ENCODE measurements at regions of chr10 and their contacts with region 1.

Region 1: GRCh38 chr10:96743988-96744585 is 23.8 kb upstream of the PIK3AP1 start:
- DNase-seq: peak; percentile 44
- ATAC-seq: peak; percentile 74
- H3K4me3 ChIP-seq: no peak overlapping the region
- H3K27ac ChIP-seq: no peak overlapping the region
- H3K4me1 ChIP-seq: peaks cover 17% of the 10 kb centered on the region
- H3K27me3 ChIP-seq: peaks cover 0 to 3% of the 10 kb centered on the region in 2 experiments; a peak in 1 of 5 replicates
- CTCF ChIP-seq: peak; percentile 70
- EP300 ChIP-seq: no peak
- POLR2A ChIP-seq: no peak
- RAD21 ChIP-seq: 0 out of 2 replicates have a peak, but pooled peaks have one; percentile 32

Region 2: DNA sequence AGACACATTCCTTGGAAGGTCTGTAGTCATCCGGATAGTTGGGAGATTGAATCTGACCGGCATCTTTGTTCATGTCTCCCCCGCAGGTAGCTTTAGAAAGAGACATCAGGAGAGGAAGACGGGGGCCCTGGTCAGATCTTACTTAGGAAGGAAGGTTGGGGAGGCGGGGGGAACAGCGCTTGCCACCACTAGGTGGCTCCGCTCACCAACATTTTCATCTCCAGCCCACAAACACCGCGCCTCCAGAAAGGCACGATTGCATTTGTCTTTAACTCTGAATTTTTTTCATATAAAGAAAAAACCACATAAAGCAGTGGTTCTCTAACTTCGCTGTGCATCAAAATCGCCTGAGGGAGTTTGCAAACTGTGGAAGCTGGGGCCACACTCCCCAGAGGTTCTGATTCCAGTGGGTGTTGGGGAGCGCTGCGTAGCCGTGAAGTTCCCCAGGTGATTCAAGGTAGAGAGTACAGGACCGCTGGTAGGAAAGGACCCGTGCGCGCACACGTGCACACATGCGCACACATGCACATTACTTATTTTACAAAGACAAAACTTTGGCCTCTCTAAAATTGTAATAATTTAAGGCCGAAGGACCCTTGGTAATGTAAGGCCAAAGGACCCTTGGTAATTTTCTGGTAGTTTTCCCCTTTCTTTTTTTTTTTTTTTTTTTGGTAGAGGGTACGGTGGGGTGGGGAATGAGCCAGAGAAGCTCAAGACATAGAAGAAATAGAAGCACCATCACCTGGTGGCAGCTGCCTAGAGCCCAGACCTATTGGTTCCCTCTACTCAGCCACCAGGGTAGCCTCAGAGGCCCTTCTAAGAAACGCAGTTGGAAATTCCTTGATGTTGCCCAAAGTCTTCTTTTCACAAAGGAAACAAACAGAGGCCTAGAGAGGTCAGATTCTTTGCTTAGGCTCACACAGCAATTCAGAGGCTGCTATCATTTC is 347.9 kb before region 1 on chr10:
- CTCF ChIA-PET with region 1: no interaction called
- POLR2A ChIA-PET with region 1: no interaction called
- in situ Hi-C with region 1: loop called (anchors 10 kb)
- intact Hi-C with region 1: no loop called
- DNase-seq: peak; percentile 41
- ATAC-seq: peak; percentile 92
- H3K4me3 ChIP-seq: peak overlapping the region in 1 of 3 experiments; percentile 20; a peak in 1 of 6 replicates
- H3K27ac ChIP-seq: no peak overlapping the region
- H3K4me1 ChIP-seq: no peaks in the 10 kb centered on the region
- H3K27me3 ChIP-seq: peaks cover 7 to 82% of the 10 kb centered on the region in 2 experiments
- CTCF ChIP-seq: peak; percentile 84
- EP300 ChIP-seq: no peak
- POLR2A ChIP-seq: no peak
- RAD21 ChIP-seq: peak; percentile 71

Region 3: DNA sequence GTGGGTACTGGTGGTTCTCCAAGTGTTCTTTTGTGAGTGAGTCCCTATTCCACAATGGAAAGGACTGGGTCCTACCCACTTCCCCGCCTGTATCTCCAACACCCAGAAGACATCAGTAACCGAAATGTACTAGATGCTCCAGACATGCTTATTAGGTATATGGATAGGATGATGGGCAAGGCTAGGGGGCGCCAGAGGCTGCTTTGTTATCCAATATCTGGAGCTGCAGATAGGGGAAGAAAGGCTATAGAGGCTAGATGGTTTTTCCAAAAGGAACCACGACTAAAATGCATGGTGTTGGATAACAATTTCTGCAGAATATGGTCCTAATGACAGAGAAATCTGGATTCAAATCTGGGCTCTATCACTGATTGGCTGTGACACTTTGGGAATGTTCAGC is 101.1 kb before region 1 on chr10:
- CTCF ChIA-PET with region 1: interaction called, 7 read pairs
- POLR2A ChIA-PET with region 1: interaction called, 3 read pairs
- in situ Hi-C with region 1: loop called (anchors 5 kb)
- intact Hi-C with region 1: loop called (anchors 5 kb)
- DNase-seq: peak; percentile 54
- ATAC-seq: peak; percentile 84
- H3K4me3 ChIP-seq: no peak overlapping the region
- H3K27ac ChIP-seq: no peak overlapping the region
- H3K4me1 ChIP-seq: peaks cover 27% of the 10 kb centered on the region
- H3K27me3 ChIP-seq: no peaks in the 10 kb centered on the region; a peak in 1 of 5 replicates
- CTCF ChIP-seq: peak; percentile 81
- EP300 ChIP-seq: no peak
- POLR2A ChIP-seq: no peak
- RAD21 ChIP-seq: peak; percentile 72

Region 4: DNA sequence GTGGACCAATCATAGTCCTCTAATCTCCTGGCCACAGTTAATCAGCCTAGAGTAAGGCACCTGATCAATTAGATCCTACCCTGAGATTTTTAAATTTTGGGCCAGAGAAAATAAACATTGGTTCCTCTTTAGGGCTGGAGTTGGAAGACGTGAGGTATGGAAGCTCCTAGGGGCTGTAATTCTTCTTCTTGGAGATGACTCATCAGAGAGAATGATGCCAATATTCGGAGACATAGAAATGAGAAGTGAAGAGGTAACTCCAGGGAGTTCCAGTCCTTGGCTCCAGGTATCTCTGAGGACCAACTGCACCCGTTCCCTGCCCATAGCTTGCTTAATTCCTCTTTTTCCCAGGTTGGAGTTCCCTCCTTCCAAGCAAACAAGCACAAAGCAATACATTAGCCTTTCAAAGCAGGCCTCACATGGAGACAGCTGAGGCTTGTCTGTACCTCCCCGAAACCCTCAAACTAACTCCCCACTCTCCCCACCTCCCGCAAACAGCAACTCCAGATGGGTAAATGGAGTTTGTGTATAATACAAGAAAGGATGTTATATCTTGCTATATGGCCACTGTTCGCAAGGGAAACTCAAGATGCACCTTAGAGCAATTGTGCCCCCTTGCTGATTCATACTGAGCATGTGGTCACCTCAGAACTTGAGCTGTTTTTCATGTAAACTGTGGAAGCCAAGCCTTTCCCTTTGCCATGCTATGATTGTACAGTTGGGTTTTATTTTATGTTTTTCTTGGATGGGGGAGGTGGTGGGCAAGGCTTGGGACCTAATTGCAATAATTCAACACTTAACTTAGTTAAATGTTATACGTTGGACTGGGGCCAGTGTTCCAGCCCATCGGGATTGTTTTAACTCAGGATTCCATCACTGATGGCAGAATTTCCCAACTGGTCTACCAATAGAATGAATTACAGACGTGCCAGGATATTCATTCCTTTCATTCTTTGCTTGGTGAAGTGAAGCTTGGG is 53.0 kb before region 1 on chr10:
- CTCF ChIA-PET with region 1: no interaction called
- POLR2A ChIA-PET with region 1: no interaction called
- in situ Hi-C with region 1: no loop called
- intact Hi-C with region 1: no loop called
- DNase-seq: no peak
- ATAC-seq: no peak
- H3K4me3 ChIP-seq: no peak overlapping the region
- H3K27ac ChIP-seq: no peak overlapping the region
- H3K4me1 ChIP-seq: no peaks in the 10 kb centered on the region
- H3K27me3 ChIP-seq: no peaks in the 10 kb centered on the region
- CTCF ChIP-seq: peak; percentile 52
- EP300 ChIP-seq: no peak
- POLR2A ChIP-seq: no peak
- RAD21 ChIP-seq: no peak

Region 5: GRCh38 chr10:96765406-96766240 is 21.5 kb after region 1 on chr10:
- CTCF ChIA-PET with region 1: no interaction called
- POLR2A ChIA-PET with region 1: no interaction called
- in situ Hi-C with region 1: no loop called
- intact Hi-C with region 1: no loop called
- DNase-seq: peak; percentile 62
- ATAC-seq: peak; percentile 97
- H3K4me3 ChIP-seq: no peak overlapping the region
- H3K27ac ChIP-seq: no peak overlapping the region
- H3K4me1 ChIP-seq: no peaks in the 10 kb centered on the region
- H3K27me3 ChIP-seq: no peaks in the 10 kb centered on the region
- CTCF ChIP-seq: peak; percentile 92
- EP300 ChIP-seq: no peak
- POLR2A ChIP-seq: no peak
- RAD21 ChIP-seq: peak; percentile 86

Region 6: GRCh38 chr10:97390091-97390490 is 646.0 kb after region 1 on chr10:
- CTCF ChIA-PET with region 1: no interaction called
- POLR2A ChIA-PET with region 1: no interaction called
- in situ Hi-C with region 1: no loop called
- intact Hi-C with region 1: no loop called
- DNase-seq: no peak
- ATAC-seq: no peak; the same call in 2 of the 3 replicates
- H3K4me3 ChIP-seq: no peak overlapping the region
- H3K27ac ChIP-seq: no peak overlapping the region
- H3K4me1 ChIP-seq: no peaks in the 10 kb centered on the region
- H3K27me3 ChIP-seq: no peaks in the 10 kb centered on the region
- CTCF ChIP-seq: no peak
- EP300 ChIP-seq: no peak
- POLR2A ChIP-seq: no peak
- RAD21 ChIP-seq: no peak

Measured in HepG2 (cell line).